HepG2 (cell line): ENCODE measurements at regions of chr5 and their contacts with region 1.

Region 1: GRCh38 chr5:683551-684481 is 9.3 kb downstream of the TPPP start:
- DNase-seq: no peak
- ATAC-seq: no peak
- H3K4me3 ChIP-seq: no peak overlapping the region
- H3K27ac ChIP-seq: no peak overlapping the region
- H3K4me1 ChIP-seq: no peaks in the 10 kb centered on the region
- H3K27me3 ChIP-seq: peaks cover 4 to 18% of the 10 kb centered on the region in 2 experiments; a peak in 4 of 5 replicates
- CTCF ChIP-seq: no peak
- EP300 ChIP-seq: no peak
- POLR2A ChIP-seq: no peak
- RAD21 ChIP-seq: no peak

Region 2: DNA sequence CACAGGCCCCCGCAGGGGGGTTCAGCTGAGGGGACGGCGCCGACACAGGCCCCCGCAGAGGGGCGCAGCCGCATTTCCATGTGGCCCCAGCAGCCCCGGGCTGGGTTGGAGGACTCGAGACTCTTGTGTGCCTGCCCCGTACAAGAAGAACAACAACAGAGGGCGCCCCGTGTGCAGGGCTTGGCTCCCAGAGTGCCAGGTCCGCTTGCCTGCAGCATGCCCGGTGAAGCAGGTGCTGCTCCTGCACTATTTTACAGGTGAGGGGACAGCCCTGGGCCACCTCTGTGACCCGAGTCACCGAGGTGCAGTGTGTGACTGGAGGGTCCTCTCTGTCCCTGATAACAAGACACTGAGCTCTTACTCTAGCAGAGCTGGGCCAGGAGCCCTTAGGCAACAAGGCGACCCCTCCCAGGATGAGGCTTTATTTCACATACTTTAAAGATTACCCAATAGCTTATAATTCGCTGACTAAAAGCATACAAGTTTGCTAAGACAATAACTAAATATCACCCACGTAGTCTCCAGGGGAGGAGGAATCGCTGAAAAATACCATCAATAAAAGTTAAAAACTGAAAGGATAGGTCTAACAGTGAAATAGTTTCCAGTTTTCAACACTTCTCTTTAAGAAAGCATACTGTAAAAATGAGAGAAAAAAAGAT is 117.9 kb before region 1 on chr5:
- CTCF ChIA-PET with region 1: no interaction called
- POLR2A ChIA-PET with region 1: no interaction called
- in situ Hi-C with region 1: no loop called
- intact Hi-C with region 1: no loop called
- DNase-seq: no peak
- ATAC-seq: peak; percentile 53
- H3K4me3 ChIP-seq: no peak overlapping the region
- H3K27ac ChIP-seq: no peak overlapping the region
- H3K4me1 ChIP-seq: no peaks in the 10 kb centered on the region
- H3K27me3 ChIP-seq: peaks cover 11 to 44% of the 10 kb centered on the region in 2 experiments
- CTCF ChIP-seq: peak; percentile 53
- EP300 ChIP-seq: no peak
- POLR2A ChIP-seq: no peak
- RAD21 ChIP-seq: no peak

Region 3: DNA sequence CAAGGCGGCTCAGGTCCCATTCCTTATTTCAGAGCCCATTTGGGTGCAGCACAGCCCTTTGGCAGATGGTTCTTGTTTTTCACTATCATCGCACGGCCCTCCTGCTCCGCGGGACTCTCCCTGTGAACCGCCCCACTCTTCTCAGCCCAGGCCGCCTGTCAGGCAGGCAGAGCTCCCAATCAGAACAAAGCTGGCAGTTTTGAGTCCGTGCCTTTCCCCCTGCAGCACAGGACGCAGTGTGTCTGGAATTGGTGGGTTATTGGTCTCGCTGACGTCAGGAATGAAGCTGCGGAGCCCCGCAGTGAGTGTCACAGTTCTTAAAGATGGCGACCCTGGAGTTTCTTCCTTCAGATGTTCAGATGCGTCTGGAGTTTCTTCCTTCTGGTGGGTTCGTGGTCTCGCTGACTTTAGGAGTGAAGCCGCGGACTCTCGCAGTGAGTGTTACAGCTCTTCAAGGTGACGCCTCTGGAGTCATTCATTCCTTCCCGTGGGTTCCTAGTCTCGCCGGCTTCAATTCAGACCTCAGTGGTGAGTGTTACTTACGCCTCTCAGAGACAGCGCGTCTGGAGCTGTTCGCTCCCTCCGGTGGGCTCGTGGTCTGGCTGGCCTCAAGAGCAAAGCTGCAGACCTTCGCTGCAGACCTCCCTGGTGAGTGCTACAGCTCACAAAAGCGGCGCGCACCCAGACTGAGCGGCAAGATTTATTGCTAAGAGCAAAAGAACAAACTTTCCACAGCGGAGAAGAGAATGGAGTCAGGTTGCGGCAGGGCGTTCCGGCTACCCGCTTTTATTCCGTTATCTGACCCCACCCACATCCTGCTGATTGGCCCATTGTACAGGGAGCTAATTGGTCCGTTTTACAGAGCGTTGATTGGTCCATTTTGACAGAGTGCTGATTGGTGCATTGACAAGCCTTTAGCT is 93.2 kb after region 1 on chr5:
- CTCF ChIA-PET with region 1: no interaction called
- POLR2A ChIA-PET with region 1: no interaction called
- in situ Hi-C with region 1: loop called (anchors 10 kb)
- intact Hi-C with region 1: no loop called
- DNase-seq: no peak
- ATAC-seq: no peak
- H3K4me3 ChIP-seq: no peak overlapping the region
- H3K27ac ChIP-seq: no peak overlapping the region
- H3K4me1 ChIP-seq: no peaks in the 10 kb centered on the region
- H3K27me3 ChIP-seq: peaks cover 16 to 22% of the 10 kb centered on the region in 2 experiments
- CTCF ChIP-seq: no peak
- EP300 ChIP-seq: no peak
- POLR2A ChIP-seq: no peak
- RAD21 ChIP-seq: no peak